ENCODE measurements at regions of chr9 and their contacts with region 1.

Region 1: GRCh38 chr9:131728961-131729360 is 10.9 kb downstream of the RAPGEF1 start:
- H3K4me3 Mint-ChIP-seq: peak overlapping the region; percentile 48
- H3K27ac Mint-ChIP-seq: peak overlapping the region; percentile 87
- H3K4me1 Mint-ChIP-seq: peaks cover 90% of the 10 kb centered on the region
- H3K27me3 Mint-ChIP-seq: no peaks in the 10 kb centered on the region

Region 2: DNA sequence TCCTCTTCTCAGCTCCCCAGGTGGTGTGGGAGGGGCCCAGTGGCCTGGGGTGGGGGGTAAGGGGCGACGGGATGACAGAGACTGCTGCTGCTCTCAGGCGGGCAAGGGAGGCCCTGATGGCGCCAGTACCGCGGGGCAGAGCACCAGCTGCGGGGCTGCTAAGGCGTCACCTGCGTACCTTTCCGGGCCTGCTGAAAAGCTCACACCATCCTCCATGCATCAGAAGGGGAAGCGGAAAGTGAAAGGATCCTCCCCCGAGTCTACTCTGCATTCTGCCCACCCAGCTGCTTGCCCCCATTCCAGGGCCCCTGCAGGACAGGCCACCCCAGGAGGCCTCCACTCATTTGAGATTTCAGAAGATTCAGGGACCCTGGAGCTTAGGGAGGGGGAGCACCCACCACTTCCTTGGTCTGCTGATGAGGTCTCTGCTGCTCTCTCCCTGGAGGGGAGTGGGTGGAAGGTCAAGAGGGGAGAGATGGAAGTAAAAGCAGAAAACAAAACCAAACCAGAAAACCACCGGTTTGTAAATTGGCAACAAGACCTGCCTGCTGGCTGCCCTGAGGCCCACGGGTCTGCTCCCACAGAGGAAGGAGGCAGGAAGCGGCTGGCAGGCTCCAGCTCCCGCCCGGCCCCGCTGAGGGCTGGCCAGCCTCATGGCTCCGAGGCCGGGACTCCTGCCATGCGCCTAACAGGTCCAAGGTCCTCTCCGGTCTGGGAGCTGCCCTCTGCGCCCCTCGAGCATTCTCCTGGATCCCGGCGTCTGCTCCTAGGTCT is 150.0 kb before region 1 on chr9:
- intact Hi-C with region 1: no loop called
- H3K4me3 Mint-ChIP-seq: no peak overlapping the region
- H3K27ac Mint-ChIP-seq: peak overlapping the region; percentile 44
- H3K4me1 Mint-ChIP-seq: peaks cover 32% of the 10 kb centered on the region
- H3K27me3 Mint-ChIP-seq: no peaks in the 10 kb centered on the region

Region 3: DNA sequence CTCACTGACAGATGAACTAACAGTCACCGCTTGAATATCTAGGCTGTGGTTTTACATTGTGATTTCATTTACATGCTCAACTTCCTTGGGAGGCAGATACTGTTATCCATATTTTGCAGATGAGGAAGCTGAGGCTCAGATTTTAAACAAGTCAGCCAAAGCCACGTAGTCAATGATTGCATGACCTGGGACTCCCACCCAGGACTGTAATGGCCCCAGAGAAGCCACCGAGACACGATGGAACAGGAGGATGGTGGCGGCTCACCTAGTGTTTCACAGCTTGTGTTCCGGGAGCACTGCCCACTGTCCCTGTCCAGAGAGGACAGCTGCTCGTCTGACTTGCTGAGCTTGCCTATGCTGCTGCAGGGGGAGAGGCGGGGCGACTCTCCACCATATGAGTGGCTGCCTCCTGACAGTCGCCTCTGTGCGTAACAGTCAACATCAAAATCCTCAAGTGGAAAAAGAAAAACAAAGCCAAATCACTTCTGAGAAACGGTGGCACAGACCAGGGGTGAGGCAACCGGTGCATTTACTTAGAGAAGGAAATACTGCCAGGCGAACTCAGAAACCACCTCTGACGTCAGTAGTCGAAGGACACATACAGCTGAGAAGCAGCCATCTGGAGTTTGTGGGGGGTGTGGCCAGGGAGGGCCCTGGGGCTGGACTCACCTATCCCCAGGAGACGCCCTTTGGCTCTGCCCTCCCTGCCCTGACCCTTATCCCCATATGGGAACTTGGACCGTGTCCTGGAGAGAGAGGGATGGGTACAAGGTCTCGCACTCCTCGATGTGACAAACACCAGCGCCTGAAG is 101.1 kb before region 1 on chr9:
- intact Hi-C with region 1: loop called (anchors 2 kb)
- H3K4me3 Mint-ChIP-seq: peak overlapping the region; percentile 62
- H3K27ac Mint-ChIP-seq: peak overlapping the region; percentile 98
- H3K4me1 Mint-ChIP-seq: peaks cover 84% of the 10 kb centered on the region
- H3K27me3 Mint-ChIP-seq: no peaks in the 10 kb centered on the region

Region 4: GRCh38 chr9:131762356-131762932 is 33.5 kb after region 1 on chr9:
- intact Hi-C with region 1: no loop called
- H3K4me3 Mint-ChIP-seq: no peak overlapping the region
- H3K27ac Mint-ChIP-seq: no peak overlapping the region
- H3K4me1 Mint-ChIP-seq: peaks cover 7% of the 10 kb centered on the region
- H3K27me3 Mint-ChIP-seq: peaks cover 51% of the 10 kb centered on the region